ENCODE measurements at regions of chr3 and their contacts with region 1.

Region 1: GRCh38 chr3:138923531-138923994 is 23.4 kb downstream of the FOXL2 start:
- DNase-seq: peak; percentile 88
- ATAC-seq: peak; percentile 84
- H3K4me3 Mint-ChIP-seq: no peak overlapping the region
- H3K27ac Mint-ChIP-seq: no peak overlapping the region
- H3K4me1 Mint-ChIP-seq: no peaks in the 10 kb centered on the region
- H3K27me3 Mint-ChIP-seq: peaks cover 12% of the 10 kb centered on the region

Region 2: GRCh38 chr3:138173769-138174420 is 749.7 kb before region 1 on chr3:
- CTCF ChIA-PET with region 1: no interaction called
- DNase-seq: no peak
- ATAC-seq: peak; percentile 6
- H3K4me3 Mint-ChIP-seq: peak overlapping the region; percentile 97
- H3K27ac Mint-ChIP-seq: peak overlapping the region; percentile 95
- H3K4me1 Mint-ChIP-seq: peaks cover 33% of the 10 kb centered on the region
- H3K27me3 Mint-ChIP-seq: peaks cover 2% of the 10 kb centered on the region

Region 3: DNA sequence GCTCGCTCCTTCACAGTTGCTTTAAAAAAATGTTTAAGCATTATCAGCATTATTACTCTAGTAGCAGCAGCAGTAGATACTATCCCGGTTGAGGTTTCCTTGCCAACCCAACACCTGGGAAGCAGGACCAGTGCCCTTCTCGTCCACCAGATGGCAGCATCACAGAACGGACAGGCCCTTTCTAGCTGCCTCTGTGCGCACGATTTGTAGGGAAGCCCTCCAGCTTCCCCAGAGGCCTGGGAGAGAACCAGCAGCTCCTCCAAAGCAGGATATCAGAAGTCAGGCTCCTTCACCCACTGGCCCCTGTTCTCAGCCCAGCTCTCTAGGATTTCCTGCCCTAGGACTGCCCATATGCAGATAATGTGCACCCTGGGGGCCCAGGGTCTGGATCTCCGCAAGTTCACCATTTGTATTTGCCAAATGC is 506.0 kb before region 1 on chr3:
- CTCF ChIA-PET with region 1: interaction called, 19 read pairs
- DNase-seq: peak; percentile 74
- ATAC-seq: peak; percentile 82
- H3K4me3 Mint-ChIP-seq: no peak overlapping the region
- H3K27ac Mint-ChIP-seq: no peak overlapping the region
- H3K4me1 Mint-ChIP-seq: peaks cover 4% of the 10 kb centered on the region
- H3K27me3 Mint-ChIP-seq: peaks cover 40% of the 10 kb centered on the region

Region 4: GRCh38 chr3:138479438-138479863 is 444.1 kb before region 1 on chr3:
- CTCF ChIA-PET with region 1: interaction called, 12 read pairs
- DNase-seq: peak; percentile 62
- ATAC-seq: peak; percentile 58
- H3K4me3 Mint-ChIP-seq: no peak overlapping the region
- H3K27ac Mint-ChIP-seq: no peak overlapping the region
- H3K4me1 Mint-ChIP-seq: no peaks in the 10 kb centered on the region
- H3K27me3 Mint-ChIP-seq: peaks cover 21% of the 10 kb centered on the region

Region 5: GRCh38 chr3:138594150-138594934 is 329.2 kb before region 1 on chr3 and contains the start of gene CEP70:
- CTCF ChIA-PET with region 1: interaction called, 125 read pairs
- DNase-seq: peak; percentile 93
- ATAC-seq: peak; percentile 95
- H3K4me3 Mint-ChIP-seq: peak within 1 kb of the TSS; percentile 88
- H3K27ac Mint-ChIP-seq: peak within 1 kb of the TSS; percentile 86
- H3K4me1 Mint-ChIP-seq: peaks cover 11% of the 10 kb centered on the region
- H3K27me3 Mint-ChIP-seq: no peaks in the 10 kb centered on the region
- total RNA-seq, gene CEP70: 9.8 to 10.5 TPM

Region 6: GRCh38 chr3:138686771-138687221 is 236.8 kb before region 1 on chr3:
- CTCF ChIA-PET with region 1: interaction called, 11 read pairs
- DNase-seq: no peak
- ATAC-seq: peak; percentile 71
- H3K4me3 Mint-ChIP-seq: no peak overlapping the region
- H3K27ac Mint-ChIP-seq: peak overlapping the region; percentile 67
- H3K4me1 Mint-ChIP-seq: peaks cover 13% of the 10 kb centered on the region
- H3K27me3 Mint-ChIP-seq: no peaks in the 10 kb centered on the region

Region 7: GRCh38 chr3:138694287-138695007 is 229.1 kb before region 1 on chr3:
- CTCF ChIA-PET with region 1: interaction called, 60 read pairs
- DNase-seq: no peak
- ATAC-seq: no peak
- H3K4me3 Mint-ChIP-seq: no peak overlapping the region
- H3K27ac Mint-ChIP-seq: no peak overlapping the region
- H3K4me1 Mint-ChIP-seq: no peaks in the 10 kb centered on the region
- H3K27me3 Mint-ChIP-seq: no peaks in the 10 kb centered on the region

Region 8: GRCh38 chr3:138724443-138724842 is 199.1 kb before region 1 on chr3:
- CTCF ChIA-PET with region 1: no interaction called
- DNase-seq: no peak
- ATAC-seq: no peak
- H3K4me3 Mint-ChIP-seq: no peak overlapping the region
- H3K27ac Mint-ChIP-seq: no peak overlapping the region
- H3K4me1 Mint-ChIP-seq: peaks cover 6% of the 10 kb centered on the region
- H3K27me3 Mint-ChIP-seq: no peaks in the 10 kb centered on the region

Region 9: DNA sequence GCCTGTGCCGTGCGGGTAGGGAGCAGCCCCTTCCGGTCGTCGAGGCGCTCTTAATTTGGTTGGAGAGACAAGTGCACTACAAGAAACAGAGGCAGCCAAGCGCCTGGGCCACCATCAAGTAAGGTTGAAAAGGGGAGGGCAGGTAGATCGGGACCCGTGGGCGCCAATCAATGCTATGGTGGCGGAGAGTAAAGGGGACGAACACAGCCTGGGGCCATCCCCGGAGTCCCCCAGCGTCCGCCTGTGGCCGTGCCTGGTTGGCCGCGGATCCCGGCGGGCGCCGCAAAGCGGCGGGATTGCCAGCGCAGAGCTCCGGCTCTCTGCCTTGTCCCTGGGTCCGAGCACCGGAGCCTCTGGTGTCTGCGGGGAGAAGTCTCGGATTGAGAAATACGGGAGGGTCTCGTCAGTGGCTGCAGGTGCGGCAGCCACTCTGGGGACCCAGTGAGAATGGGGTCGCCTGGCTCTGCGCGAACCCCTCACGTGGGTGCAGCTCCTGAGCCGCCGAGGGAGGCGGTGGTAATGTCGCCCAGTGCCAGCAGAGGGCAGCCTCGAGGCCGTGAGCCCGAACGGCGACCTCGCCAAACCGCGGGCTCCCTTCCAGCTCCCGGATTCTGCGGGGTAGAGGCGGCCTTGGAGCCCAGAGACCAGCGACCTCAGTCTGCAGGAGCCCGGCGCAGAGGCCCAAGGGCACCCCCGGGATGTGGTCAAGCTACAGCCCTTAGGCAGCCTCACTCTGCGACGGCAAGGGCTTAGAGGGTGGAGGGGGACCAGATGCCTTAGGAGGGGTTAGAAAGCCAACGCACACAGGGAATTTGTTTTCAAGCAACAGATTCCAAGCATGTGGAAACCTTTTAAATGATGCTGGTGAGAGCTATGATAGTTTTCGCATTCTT is 12.5 kb after region 1 on chr3:
- CTCF ChIA-PET with region 1: interaction called, 48 read pairs
- DNase-seq: peak; percentile 67
- ATAC-seq: peak; percentile 77
- H3K4me3 Mint-ChIP-seq: peak overlapping the region; percentile 52
- H3K27ac Mint-ChIP-seq: no peak overlapping the region
- H3K4me1 Mint-ChIP-seq: peaks cover 24% of the 10 kb centered on the region
- H3K27me3 Mint-ChIP-seq: peaks cover 86% of the 10 kb centered on the region